ENCODE measurements at regions of chr5 and their contacts with region 1.

Region 1: DNA sequence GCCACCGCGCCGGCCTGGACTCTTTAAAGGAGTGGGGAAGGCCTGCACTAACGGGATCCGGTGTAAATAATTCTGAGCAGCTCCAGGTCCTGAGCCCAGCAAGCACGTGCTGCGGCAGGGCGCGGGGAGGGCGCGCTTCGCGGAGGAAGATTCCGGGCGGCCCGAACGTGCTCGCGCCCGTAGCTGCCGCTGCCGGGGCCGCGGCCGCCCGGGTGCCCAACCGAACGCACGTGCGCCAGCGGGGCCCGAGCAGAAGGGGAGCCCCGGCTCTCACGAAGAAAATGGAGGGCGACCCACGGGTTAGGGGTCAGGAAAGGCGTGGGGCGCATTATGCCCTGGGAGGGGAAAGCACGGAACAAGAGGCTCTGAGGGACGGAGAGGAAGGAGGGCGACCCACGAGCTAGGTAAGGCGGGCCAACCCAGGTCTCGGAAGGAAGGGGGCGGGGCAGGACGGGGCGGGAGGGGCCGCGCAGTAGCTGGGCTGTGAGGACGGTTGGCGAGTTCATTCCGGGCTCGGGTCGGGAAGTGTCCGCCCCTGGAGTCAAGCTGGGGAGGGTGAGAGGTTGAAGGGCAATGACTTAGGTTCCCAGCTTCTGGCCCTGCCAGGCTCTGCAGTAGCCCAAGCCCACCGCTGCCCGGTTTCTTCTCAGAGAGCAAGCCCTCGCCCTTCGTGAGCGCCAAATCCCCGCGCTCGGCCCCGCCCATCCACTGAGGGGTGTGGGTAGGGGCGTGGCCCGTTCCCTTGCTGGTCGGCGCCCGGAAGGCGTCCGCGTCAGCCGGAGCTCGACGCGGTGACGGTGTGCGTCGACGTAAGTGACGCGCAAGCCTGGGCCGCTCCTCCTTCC is at the start of gene ZNF131:
- DNase-seq: peak; percentile 97
- ATAC-seq: peak; percentile 87
- H3K4me3 Mint-ChIP-seq: peak within 1 kb of the TSS; percentile 85
- H3K27ac Mint-ChIP-seq: peak within 1 kb of the TSS; percentile 94
- H3K4me1 Mint-ChIP-seq: peaks cover 37% of the 10 kb centered on the region
- H3K27me3 Mint-ChIP-seq: peaks cover 4% of the 10 kb centered on the region
- total RNA-seq, gene ZNF131: 45.8 to 52.8 TPM

Region 2: DNA sequence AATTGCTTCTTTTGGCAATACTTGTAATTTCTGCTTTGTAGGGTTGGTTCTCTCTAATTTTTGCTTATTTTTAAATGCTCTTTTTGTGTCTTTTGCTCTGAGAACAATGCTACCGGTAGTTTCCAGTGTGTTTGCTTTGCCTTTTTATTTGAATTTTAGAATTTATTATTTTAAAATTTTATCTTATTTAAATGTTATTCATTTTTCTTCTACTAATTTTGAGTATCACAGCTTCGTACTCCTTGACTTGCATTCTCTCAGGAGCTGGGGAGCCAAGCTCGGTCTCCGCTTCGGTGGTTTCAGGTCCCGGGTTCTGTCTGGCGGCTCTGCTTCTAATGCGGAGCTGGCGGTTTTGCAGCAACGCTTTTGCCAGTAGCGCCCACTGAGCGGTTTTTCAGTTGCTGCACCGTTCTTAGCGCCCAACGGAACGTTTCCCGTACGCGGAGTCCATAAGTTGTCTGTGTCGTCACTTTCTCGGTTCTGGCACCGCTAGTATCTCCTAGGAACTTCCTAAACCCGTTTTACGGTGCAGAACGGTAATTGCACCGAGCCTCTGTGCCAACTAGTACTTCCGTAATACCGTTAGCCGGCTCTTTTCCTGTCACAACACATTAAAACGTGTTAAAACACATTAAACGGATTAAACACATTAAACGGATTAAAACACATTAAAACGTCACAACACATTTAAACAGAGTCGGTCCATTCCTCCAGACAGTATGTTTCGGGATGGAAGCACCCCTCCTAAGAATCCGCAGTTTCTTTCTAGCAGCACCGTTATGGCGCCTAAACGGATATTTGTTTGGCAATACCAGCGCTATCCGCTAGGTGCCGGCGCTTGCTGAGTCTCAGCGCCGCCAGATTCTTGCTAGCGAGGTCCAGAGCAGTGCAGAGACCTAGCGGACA is 126.4 kb before region 1 on chr5:
- CTCF ChIA-PET with region 1: interaction called, 6 read pairs
- POLR2A ChIA-PET with region 1: interaction called, 25 read pairs
- DNase-seq: peak; percentile 94
- ATAC-seq: peak; percentile 60
- H3K4me3 Mint-ChIP-seq: peak overlapping the region; percentile 94
- H3K27ac Mint-ChIP-seq: peak overlapping the region; percentile 99
- H3K4me1 Mint-ChIP-seq: peaks cover 19% of the 10 kb centered on the region
- H3K27me3 Mint-ChIP-seq: no peaks in the 10 kb centered on the region

Region 3: DNA sequence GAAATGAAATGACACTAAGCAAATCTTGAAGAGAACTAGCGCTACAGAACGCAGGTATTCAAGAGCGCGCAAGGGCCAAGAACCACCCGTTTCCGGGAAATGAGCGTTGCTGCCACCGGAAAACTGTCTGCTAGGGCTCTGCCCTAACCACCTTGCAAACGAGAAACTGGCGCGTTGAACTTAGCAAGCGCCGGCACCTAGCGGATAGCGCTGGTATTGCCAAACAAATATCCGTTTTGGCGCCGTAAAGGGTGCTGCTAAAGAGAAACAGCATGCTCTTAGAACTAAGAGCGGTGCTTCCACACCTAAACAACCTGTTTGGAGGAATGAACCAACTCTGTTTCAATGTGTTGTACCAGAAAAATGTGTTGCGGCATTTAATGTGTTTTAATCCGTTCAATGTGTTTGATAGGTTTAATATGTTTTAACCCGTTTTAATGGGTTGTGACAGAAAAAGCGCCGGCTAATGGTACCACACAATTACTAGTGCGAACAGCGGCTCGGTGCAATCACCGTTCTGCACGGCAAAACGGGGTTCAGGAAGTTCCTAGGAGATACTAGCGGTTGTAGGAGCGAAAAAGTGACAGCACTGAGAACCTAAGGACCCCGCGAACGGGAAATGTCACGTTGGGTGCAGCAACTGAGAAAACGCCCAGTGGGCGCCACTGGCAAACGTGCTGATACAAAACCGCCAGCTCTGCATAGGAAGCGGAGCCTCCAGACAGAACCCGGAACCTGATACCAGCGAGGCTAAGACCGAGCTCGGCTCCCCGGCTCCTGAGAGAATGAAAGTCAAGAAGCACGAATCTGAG is 80.4 kb before region 1 on chr5 and contains the start of gene ANXA2R:
- CTCF ChIA-PET with region 1: interaction called, 13 read pairs
- POLR2A ChIA-PET with region 1: interaction called, 43 read pairs
- DNase-seq: peak; percentile 97
- ATAC-seq: peak; percentile 49
- H3K4me3 Mint-ChIP-seq: peak within 1 kb of the TSS; percentile 93
- H3K27ac Mint-ChIP-seq: peak within 1 kb of the TSS; percentile 100
- H3K4me1 Mint-ChIP-seq: peaks cover 39% of the 10 kb centered on the region
- H3K27me3 Mint-ChIP-seq: no peaks in the 10 kb centered on the region
- total RNA-seq, gene ANXA2R: 28.0 to 29.3 TPM

Region 4: GRCh38 chr5:43105369-43106289 is 15.3 kb before region 1 on chr5:
- CTCF ChIA-PET with region 1: interaction called, 183 read pairs
- POLR2A ChIA-PET with region 1: interaction called, 37 read pairs
- DNase-seq: peak; percentile 93
- ATAC-seq: peak; percentile 98
- H3K4me3 Mint-ChIP-seq: peak overlapping the region; percentile 74
- H3K27ac Mint-ChIP-seq: peak overlapping the region; percentile 87
- H3K4me1 Mint-ChIP-seq: peaks cover 45% of the 10 kb centered on the region
- H3K27me3 Mint-ChIP-seq: no peaks in the 10 kb centered on the region

Region 5: GRCh38 chr5:43140286-43140685 is 19.3 kb after region 1 on chr5:
- CTCF ChIA-PET with region 1: interaction called, 18 read pairs
- POLR2A ChIA-PET with region 1: interaction called, 6 read pairs
- DNase-seq: no peak
- ATAC-seq: peak; percentile 36
- H3K4me3 Mint-ChIP-seq: no peak overlapping the region
- H3K27ac Mint-ChIP-seq: no peak overlapping the region
- H3K4me1 Mint-ChIP-seq: peaks cover 32% of the 10 kb centered on the region
- H3K27me3 Mint-ChIP-seq: no peaks in the 10 kb centered on the region

Region 6: DNA sequence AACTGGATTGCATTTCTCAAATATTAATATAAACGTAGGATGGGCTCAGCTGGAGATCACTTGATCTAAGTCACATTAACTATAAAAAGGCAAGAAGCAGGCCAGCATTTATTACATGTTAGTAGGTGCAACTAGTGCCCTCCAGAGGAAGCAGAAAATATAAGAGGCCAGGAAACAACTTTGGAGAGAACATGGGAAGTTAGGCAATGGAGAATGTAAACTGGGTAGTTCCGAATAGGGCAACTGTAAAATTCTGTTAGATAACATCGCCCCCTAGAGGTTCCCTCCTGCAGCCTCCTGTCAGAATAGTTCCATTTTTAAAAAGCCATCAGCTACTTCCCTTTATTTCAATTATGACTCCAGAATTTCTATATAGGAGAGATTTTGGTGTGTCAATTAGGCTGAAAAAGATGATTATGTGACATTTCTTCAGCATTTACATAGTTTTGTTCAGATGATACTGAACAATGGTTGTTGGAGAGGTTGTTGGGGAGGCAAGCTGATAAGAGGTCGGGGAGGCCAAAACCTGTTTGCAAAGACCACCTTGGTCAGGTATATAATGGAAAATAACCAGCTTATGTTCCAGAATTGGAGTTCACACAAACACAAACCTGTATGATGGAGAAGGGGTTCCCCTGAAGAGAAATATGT is 268.9 kb after region 1 on chr5:
- CTCF ChIA-PET with region 1: interaction called, 14 read pairs
- POLR2A ChIA-PET with region 1: no interaction called
- DNase-seq: peak; percentile 65
- ATAC-seq: peak; percentile 84
- H3K4me3 Mint-ChIP-seq: no peak overlapping the region
- H3K27ac Mint-ChIP-seq: peak overlapping the region; percentile 28
- H3K4me1 Mint-ChIP-seq: peaks cover 11% of the 10 kb centered on the region
- H3K27me3 Mint-ChIP-seq: no peaks in the 10 kb centered on the region